ENCODE measurements at regions of chr13 and their contacts with region 1.

Region 1: GRCh38 chr13:32443111-32443510 is 15.2 kb upstream of the N4BP2L1 start:
- DNase-seq: no peak
- ATAC-seq: peak; percentile 84
- H3K4me3 Mint-ChIP-seq: peak overlapping the region; percentile 15
- H3K27ac Mint-ChIP-seq: peak overlapping the region; percentile 71
- H3K4me1 Mint-ChIP-seq: peaks cover 21% of the 10 kb centered on the region
- H3K27me3 Mint-ChIP-seq: no peaks in the 10 kb centered on the region
- CTCF ChIP-seq: peak; percentile 26

Region 2: DNA sequence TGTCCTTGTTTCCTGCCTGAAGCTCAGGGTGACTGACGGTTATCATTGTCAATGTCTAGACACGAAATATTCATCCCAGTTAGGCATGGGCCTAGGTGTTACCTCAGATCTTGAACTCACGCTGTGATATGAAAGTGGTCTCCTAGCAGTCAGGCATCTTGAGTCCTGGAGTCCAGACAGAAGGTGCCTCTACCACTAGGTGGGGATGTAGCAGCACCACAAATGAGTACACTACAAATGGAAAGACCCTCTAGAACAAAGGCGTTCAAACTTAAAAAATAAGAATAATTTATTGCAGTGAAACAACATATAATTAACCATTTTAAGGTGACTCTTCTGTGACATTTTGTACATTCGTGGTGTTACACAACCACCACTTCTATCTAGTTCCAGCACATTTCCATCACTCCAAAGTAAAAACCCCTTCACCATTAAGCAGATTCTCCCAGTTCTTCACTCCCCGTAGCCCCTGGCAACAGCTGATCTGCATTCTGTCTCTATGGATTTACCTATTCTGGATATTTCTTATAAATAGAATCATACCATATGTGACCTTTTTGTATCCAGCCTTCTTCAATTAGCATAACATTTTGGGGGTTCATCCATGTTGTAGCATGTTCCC is 423.4 kb before region 1 on chr13:
- CTCF ChIA-PET with region 1: no interaction called
- POLR2A ChIA-PET with region 1: no interaction called
- intact Hi-C with region 1: loop called (anchors 2 kb)
- DNase-seq: no peak
- ATAC-seq: peak; percentile 85
- H3K4me3 Mint-ChIP-seq: no peak overlapping the region
- H3K27ac Mint-ChIP-seq: no peak overlapping the region
- H3K4me1 Mint-ChIP-seq: no peaks in the 10 kb centered on the region
- H3K27me3 Mint-ChIP-seq: no peaks in the 10 kb centered on the region
- CTCF ChIP-seq: no peak

Region 3: DNA sequence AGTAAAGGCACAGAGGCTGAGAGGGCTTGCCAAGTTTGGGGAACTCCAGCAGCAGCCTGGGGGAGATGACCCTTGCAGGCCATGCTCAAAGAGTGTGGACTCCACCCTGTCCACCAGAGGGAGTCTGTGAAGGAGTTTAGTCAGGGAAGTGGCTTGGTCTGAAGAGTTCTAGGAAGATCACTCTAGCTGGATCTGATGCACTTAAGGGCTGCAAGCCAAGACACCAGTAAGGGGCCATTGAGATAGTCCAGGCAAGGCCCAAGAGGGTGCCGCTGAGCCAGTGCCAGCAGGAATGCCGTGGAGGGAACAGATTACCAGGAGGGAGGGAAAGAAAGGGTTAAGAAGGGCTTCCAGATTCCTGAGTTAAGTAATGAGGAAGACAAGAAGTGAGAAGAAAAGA is 196.6 kb before region 1 on chr13:
- CTCF ChIA-PET with region 1: interaction called, 6 read pairs
- POLR2A ChIA-PET with region 1: no interaction called
- intact Hi-C with region 1: loop called (anchors 1 kb)
- DNase-seq: no peak
- ATAC-seq: peak; percentile 67
- H3K4me3 Mint-ChIP-seq: no peak overlapping the region
- H3K27ac Mint-ChIP-seq: no peak overlapping the region
- H3K4me1 Mint-ChIP-seq: no peaks in the 10 kb centered on the region
- H3K27me3 Mint-ChIP-seq: no peaks in the 10 kb centered on the region
- CTCF ChIP-seq: no peak

Region 4: GRCh38 chr13:32315238-32316027 is 127.7 kb before region 1 on chr13 and contains the starts of genes BRCA2 and ZAR1L:
- CTCF ChIA-PET with region 1: interaction called, 5 read pairs
- POLR2A ChIA-PET with region 1: no interaction called
- intact Hi-C with region 1: loop called (anchors 1 kb)
- DNase-seq: peak; percentile 80
- ATAC-seq: peak; percentile 88
- H3K4me3 Mint-ChIP-seq: peak within 1 kb of the TSS; percentile 94
- H3K27ac Mint-ChIP-seq: peak within 1 kb of the TSS; percentile 100
- H3K4me1 Mint-ChIP-seq: peaks cover 14% of the 10 kb centered on the region
- H3K27me3 Mint-ChIP-seq: no peaks in the 10 kb centered on the region
- CTCF ChIP-seq: no peak
- total RNA-seq, gene BRCA2: 4.5 and 6.6 TPM in 2 replicates
- total RNA-seq, gene ZAR1L: not detected in 2 replicates

Region 5: DNA sequence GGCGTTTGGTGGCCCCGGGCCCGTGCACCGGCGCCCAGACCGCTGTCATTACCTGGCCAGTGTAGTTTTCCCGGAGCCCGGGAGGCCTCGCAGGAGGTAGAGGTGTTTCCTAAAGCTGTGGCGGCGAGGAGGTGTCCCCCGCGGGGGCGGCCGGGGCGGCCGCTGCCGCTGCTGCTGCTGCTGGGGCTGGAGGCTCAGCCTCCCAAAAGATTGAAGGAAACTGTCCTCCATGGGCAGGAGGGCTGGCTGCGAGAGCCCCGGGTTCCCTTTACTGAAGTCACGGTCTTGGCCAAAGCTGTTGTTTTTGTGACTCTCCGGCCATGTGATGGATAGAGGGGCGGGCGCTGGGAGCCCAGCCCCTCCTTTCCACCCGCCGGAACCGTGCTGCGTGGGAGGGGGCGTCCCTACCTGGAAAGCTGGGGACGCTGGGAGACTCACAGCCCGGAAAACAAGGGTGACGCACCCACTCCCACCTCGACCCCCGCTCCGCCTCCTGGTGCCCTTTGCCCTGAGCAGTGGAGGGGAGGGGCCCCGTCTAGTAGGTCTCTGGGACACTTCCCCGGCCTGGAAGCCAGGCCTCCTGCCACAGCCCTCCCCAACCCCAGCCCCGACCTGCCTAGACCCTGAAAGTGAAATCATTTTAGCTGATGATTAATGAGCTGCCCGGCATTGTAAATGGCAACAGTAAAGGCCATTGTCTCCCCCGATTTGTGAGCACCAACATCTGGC is 15.1 kb before region 1 on chr13 and contains the start of gene N4BP2L1:
- CTCF ChIA-PET with region 1: interaction called, 4 read pairs
- POLR2A ChIA-PET with region 1: interaction called, 7 read pairs
- intact Hi-C with region 1: loop called (anchors 1 kb)
- DNase-seq: peak; percentile 77
- ATAC-seq: peak; percentile 73
- H3K4me3 Mint-ChIP-seq: peak within 1 kb of the TSS; percentile 95
- H3K27ac Mint-ChIP-seq: peak within 1 kb of the TSS; percentile 99
- H3K4me1 Mint-ChIP-seq: peaks cover 48% of the 10 kb centered on the region
- H3K27me3 Mint-ChIP-seq: no peaks in the 10 kb centered on the region
- CTCF ChIP-seq: no peak
- total RNA-seq, gene N4BP2L1: 23.0 and 24.3 TPM in 2 replicates